T-cell (primary cell): ENCODE measurements at regions of chr2 and their contacts with region 1.

Region 1: GRCh38 chr2:68225119-68225632 is 27.2 kb downstream of the PPP3R1 start:
- DNase-seq: peak in 15 of 35 experiments; percentile 3 to 57 (median 8)
- ATAC-seq: peak; percentile 64 to 89 (median 72)
- H3K4me3 ChIP-seq: no peak overlapping the region
- H3K4me3 Mint-ChIP-seq: peak overlapping the region in 2 of 3 donors; percentile 19 to 22
- H3K27ac ChIP-seq: no peak overlapping the region
- H3K27ac Mint-ChIP-seq: peak overlapping the region; percentile 50 to 58
- H3K4me1 ChIP-seq: peaks cover 22 to 24% of the 10 kb centered on the region in 2 experiments
- H3K4me1 Mint-ChIP-seq: peaks cover 96 to 99% (median 98%) of the 10 kb centered on the region in 3 donors
- H3K27me3 ChIP-seq: no peaks in the 10 kb centered on the region
- H3K27me3 Mint-ChIP-seq: no peaks in the 10 kb centered on the region

Region 2: DNA sequence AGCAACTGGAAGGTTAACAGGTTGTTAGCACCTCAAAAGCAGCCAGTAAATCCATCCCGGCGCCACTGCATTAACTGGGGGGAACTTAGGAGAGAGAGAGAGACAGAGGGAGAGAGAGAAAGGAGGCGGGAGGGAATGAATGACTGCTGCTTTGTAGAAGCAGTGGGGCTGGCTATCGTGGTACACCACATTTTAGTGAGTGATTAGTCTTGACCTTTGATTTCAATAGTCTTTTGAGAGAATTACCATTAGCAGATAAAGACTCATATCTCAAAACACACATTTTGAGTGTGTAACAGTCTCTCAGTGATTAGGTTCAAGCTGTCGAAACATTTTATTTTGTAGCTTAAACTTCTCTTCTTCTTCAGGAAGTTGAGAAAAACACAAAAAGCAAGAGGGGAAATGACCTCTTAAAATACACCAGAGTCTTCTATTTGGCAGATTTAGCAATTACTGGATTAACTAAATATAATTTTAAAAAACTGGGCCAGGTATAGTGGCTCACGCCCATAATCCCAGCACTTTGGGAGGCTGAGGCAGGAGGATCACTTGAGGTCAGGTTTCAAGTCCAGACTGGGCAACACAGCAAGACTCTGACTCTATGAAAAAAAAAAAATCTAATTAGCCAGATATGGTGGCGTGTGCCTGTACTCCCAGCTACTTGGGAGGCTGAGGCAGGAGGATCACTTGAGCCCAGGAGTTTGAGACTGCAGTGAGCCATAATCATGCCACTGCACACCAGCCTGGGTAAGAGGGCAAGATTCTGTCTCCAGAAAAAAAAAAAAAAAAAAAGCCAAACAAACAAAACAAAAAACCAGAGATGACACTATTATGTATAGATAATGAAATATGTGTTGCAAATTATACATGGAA is 89.5 kb before region 1 on chr2:
- CTCF ChIA-PET with region 1: no interaction called
- POLR2A ChIA-PET with region 1: interaction called in 1 of 2 experiments, 12 read pairs
- DNase-seq: no peak
- ATAC-seq: no peak
- H3K4me3 ChIP-seq: no peak overlapping the region
- H3K4me3 Mint-ChIP-seq: no peak overlapping the region
- H3K27ac ChIP-seq: no peak overlapping the region
- H3K27ac Mint-ChIP-seq: peak overlapping the region in 1 of 2 donors; percentile 28
- H3K4me1 ChIP-seq: no peaks in the 10 kb centered on the region
- H3K4me1 Mint-ChIP-seq: no peaks in the 10 kb centered on the region
- H3K27me3 ChIP-seq: no peaks in the 10 kb centered on the region
- H3K27me3 Mint-ChIP-seq: no peaks in the 10 kb centered on the region

Region 3: GRCh38 chr2:68151037-68151436 is 74.1 kb before region 1 on chr2:
- CTCF ChIA-PET with region 1: no interaction called
- POLR2A ChIA-PET with region 1: no interaction called
- DNase-seq: no peak
- ATAC-seq: no peak
- H3K4me3 ChIP-seq: no peak overlapping the region
- H3K4me3 Mint-ChIP-seq: no peak overlapping the region
- H3K27ac ChIP-seq: no peak overlapping the region
- H3K27ac Mint-ChIP-seq: peak overlapping the region; percentile 2 to 23
- H3K4me1 ChIP-seq: peaks cover 12 to 28% of the 10 kb centered on the region in 2 experiments
- H3K4me1 Mint-ChIP-seq: peaks cover 32 to 37% (median 37%) of the 10 kb centered on the region in 3 donors
- H3K27me3 ChIP-seq: no peaks in the 10 kb centered on the region
- H3K27me3 Mint-ChIP-seq: no peaks in the 10 kb centered on the region

Region 4: DNA sequence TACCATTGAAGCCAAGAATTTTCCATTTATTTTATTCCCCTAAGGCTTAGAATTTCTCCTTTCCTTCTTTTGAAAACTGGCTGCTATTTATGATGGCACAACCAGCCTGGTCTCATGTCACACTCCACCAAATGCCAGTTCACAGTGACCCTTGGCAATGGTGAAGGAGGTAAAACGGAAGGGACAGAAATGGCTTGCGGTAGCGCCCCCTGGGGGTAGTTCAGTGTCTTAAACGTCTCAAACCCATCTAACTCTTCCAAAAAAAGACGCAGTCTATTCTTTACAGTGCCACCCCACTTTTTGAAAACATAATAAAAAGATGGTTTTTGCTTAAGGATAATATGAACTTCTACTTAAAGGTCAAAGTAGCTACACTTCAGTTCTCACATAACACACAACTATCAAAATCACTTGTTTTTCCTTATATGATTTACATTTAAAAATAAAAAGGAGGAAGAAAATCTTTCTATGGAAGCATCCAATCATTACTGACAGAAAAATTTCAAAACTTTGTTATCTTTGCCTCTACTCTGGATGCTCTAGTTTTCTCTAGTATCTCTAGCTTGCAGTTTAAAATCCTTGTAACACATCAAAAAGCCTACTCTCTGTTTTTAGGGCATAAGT is 39.5 kb before region 1 on chr2:
- CTCF ChIA-PET with region 1: interaction called in 1 of 2 experiments, 10 read pairs
- POLR2A ChIA-PET with region 1: no interaction called
- DNase-seq: peak; percentile 4 to 81 (median 40)
- ATAC-seq: peak in 1 of 4 experiments; percentile 69
- H3K4me3 ChIP-seq: no peak overlapping the region
- H3K4me3 Mint-ChIP-seq: no peak overlapping the region
- H3K27ac ChIP-seq: no peak overlapping the region
- H3K27ac Mint-ChIP-seq: peak overlapping the region in 1 of 2 donors; percentile 44
- H3K4me1 ChIP-seq: peaks cover 2 to 5% of the 10 kb centered on the region in 2 experiments
- H3K4me1 Mint-ChIP-seq: peaks cover 37 to 48% (median 48%) of the 10 kb centered on the region in 3 donors
- H3K27me3 ChIP-seq: no peaks in the 10 kb centered on the region
- H3K27me3 Mint-ChIP-seq: no peaks in the 10 kb centered on the region

Region 5: DNA sequence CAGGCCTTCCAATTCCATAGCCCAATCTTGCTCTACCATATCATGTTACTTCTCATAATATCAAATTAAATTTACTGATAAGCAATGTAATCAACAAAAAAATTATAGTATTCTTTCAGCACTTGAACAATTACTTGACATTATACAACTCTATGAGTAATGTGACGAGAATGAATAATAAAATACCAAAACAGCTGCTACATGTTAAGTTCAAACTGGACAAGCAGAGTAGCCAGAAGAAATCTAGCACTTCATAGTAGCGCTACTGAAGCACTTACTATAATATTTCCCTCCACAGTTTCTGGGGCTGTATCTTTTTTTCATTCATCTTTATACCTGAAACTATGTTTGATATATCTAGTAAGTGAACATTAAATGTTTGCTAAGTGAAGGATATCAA is 12.2 kb after region 1 on chr2:
- CTCF ChIA-PET with region 1: interaction called in 1 of 2 experiments, 14 read pairs
- POLR2A ChIA-PET with region 1: no interaction called
- DNase-seq: no peak
- ATAC-seq: no peak
- H3K4me3 ChIP-seq: no peak overlapping the region
- H3K4me3 Mint-ChIP-seq: peak overlapping the region in 1 of 3 donors; percentile 62
- H3K27ac ChIP-seq: no peak overlapping the region
- H3K27ac Mint-ChIP-seq: no peak overlapping the region
- H3K4me1 ChIP-seq: peaks cover 21 to 35% of the 10 kb centered on the region in 2 experiments
- H3K4me1 Mint-ChIP-seq: peaks cover 89 to 92% (median 90%) of the 10 kb centered on the region in 3 donors
- H3K27me3 ChIP-seq: no peaks in the 10 kb centered on the region
- H3K27me3 Mint-ChIP-seq: no peaks in the 10 kb centered on the region